Ascending aorta (tissue), 2 donors: ENCODE measurements at regions of chr9 and their contacts with region 1.

Region 1: GRCh38 chr9:32579706-32580331 is 6.9 kb upstream of the NDUFB6 start:
- DNase-seq: peak in 1 of 2 donors; percentile 84
- H3K4me3 ChIP-seq: peak overlapping the region in 1 of 2 donors; percentile 54
- H3K27ac ChIP-seq: no peak overlapping the region
- H3K4me1 ChIP-seq: no peaks in the 10 kb centered on the region
- H3K27me3 ChIP-seq: no peaks in the 10 kb centered on the region
- CTCF ChIP-seq: peak; percentile 60 to 90 (median 87)

Region 2: DNA sequence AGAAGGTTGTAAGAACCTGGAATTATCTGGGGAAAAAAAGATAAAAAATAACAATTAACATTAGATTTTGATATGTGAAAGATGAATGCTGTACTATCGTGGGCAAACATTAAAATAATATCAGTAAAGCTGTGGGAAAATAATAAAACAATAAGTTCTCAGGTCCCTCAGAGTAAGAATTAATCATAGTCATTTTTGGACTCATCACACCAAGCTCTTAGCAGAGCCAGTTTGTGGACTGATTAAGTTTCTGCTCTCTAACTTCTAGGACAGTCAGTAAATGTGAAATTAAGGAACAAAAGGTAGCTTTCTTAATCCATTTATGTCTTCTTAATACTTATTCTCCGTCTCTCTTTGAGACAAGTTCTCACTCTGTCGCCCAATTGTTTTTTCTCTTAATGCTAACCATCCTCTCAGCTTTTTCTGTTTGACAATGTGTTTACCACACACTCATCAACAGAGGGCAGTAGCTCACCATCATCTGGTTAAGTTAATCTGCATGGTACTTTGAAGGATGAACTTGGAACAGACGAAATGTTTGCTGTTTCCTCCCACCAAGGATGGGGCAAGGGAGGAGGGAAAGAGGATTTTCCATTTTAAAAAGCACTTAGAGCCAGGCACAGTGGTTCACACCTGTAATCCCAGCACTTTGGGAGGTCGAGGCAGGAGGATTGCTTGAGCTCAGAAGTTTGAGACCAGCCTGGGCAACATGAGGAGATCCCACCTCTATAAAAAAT is 200.7 kb before region 1 on chr9:
- intact Hi-C with region 1: loop called (anchors 1 kb)
- DNase-seq: no peak
- H3K4me3 ChIP-seq: no peak overlapping the region
- H3K27ac ChIP-seq: no peak overlapping the region
- H3K4me1 ChIP-seq: no peaks in the 10 kb centered on the region
- H3K27me3 ChIP-seq: no peaks in the 10 kb centered on the region
- CTCF ChIP-seq: peak; percentile 74 to 84 (median 77)

Region 3: GRCh38 chr9:32968101-32969011 is 388.5 kb after region 1 on chr9:
- intact Hi-C with region 1: loop called (anchors 2 kb)
- DNase-seq: peak in 1 of 2 donors; percentile 72
- H3K4me3 ChIP-seq: no peak overlapping the region
- H3K27ac ChIP-seq: no peak overlapping the region
- H3K4me1 ChIP-seq: no peaks in the 10 kb centered on the region
- H3K27me3 ChIP-seq: no peaks in the 10 kb centered on the region
- CTCF ChIP-seq: peak in 2 of 3 experiments; percentile 58 to 75